Activated naive CD4-positive, alpha-beta T cell treated with anti-CD3 and anti-CD28 coated beads for 36 hours (primary cell): ENCODE measurements at regions of chr7 and their contacts with region 1.

Region 1: GRCh38 chr7:28155019-28155660 is 25.5 kb downstream of the JAZF1 start:
- DNase-seq: no peak
- H3K4me3 Mint-ChIP-seq: no peak overlapping the region
- H3K27ac Mint-ChIP-seq: peak overlapping the region; percentile 36
- H3K4me1 Mint-ChIP-seq: peaks cover 45% of the 10 kb centered on the region
- H3K27me3 Mint-ChIP-seq: no peaks in the 10 kb centered on the region

Region 2: DNA sequence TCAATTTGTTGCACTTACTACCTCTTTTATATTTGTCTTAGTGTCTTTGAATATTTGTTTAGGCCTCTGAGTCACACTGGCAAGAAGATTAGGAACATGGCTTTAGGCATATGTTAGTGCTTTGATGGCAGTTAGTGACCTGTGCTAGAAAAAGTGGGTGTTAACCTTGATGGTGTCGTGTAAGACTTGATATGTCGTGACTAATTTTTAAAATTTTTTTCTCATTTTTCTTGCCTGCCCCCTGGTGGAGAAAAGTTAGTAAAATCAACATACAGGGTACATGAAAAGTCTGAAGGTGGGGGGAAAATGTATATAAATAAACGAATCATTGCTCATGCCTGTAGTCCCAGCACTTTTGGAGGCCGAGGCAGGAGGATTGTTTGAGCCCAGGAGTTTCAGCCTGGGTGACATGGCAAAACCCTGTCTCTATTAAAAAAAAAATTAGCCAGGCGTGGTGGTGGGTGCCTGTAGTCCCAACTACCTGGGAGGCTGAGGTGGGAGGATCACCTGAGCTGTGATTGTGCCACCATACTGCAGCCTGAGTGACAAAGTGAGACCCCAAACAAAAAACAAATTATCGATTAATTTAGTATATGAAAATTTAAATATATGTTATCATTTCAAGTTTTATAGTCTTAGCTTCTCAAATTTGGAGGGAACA is 370.6 kb before region 1 on chr7:
- CTCF ChIA-PET with region 1: no interaction called
- intact Hi-C with region 1: loop called (anchors 1 kb)
- DNase-seq: peak; percentile 26
- H3K4me3 Mint-ChIP-seq: no peak overlapping the region
- H3K27ac Mint-ChIP-seq: no peak overlapping the region
- H3K4me1 Mint-ChIP-seq: peaks cover 37% of the 10 kb centered on the region
- H3K27me3 Mint-ChIP-seq: no peaks in the 10 kb centered on the region

Region 3: DNA sequence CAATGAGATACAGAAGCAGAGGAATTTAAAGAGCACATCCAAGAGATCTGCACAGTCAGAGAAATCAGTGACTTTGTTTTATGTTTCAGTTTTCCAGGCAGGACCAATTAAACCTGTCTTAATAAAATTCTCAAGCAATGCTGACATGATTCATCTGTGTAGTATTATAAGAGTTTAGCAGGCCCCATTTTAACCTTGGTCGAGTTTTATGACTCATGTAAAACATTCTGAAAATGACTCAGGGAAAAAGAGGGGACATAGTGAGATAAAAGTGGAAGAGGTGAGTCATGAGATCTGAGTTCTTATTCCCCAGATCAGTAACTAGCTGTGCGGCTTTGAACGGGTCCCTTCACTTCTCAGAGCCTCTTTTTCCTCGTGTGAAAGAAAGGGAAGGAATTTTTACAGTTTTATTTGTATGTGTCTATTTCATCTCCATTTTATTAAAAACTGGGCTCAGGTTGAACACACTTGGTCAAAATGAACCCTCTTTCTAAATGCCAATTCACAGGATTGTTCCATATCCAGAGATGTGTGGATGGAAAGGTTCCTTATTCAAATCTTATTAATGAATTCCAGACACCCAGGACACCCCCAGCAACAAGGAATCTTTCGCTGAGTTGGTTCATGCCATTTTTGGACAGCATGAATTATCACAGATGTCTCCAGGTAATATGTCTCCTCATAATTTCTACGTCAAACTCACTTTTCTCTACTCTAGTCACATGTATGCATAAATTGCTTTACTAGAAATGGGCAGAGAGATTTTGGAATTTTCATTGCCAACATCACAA is 117.7 kb before region 1 on chr7:
- CTCF ChIA-PET with region 1: no interaction called
- intact Hi-C with region 1: loop called (anchors 1 kb)
- DNase-seq: peak; percentile 50
- H3K4me3 Mint-ChIP-seq: no peak overlapping the region
- H3K27ac Mint-ChIP-seq: no peak overlapping the region
- H3K4me1 Mint-ChIP-seq: peaks cover 26% of the 10 kb centered on the region
- H3K27me3 Mint-ChIP-seq: peaks cover 16% of the 10 kb centered on the region

Region 4: GRCh38 chr7:28207486-28208158 is 52.5 kb after region 1 on chr7:
- CTCF ChIA-PET with region 1: interaction called, 4 read pairs
- intact Hi-C with region 1: loop called (anchors 1 kb)
- DNase-seq: peak; percentile 30
- H3K4me3 Mint-ChIP-seq: no peak overlapping the region
- H3K27ac Mint-ChIP-seq: peak overlapping the region; percentile 43
- H3K4me1 Mint-ChIP-seq: peaks cover 39% of the 10 kb centered on the region
- H3K27me3 Mint-ChIP-seq: peaks cover 7% of the 10 kb centered on the region

Region 5: DNA sequence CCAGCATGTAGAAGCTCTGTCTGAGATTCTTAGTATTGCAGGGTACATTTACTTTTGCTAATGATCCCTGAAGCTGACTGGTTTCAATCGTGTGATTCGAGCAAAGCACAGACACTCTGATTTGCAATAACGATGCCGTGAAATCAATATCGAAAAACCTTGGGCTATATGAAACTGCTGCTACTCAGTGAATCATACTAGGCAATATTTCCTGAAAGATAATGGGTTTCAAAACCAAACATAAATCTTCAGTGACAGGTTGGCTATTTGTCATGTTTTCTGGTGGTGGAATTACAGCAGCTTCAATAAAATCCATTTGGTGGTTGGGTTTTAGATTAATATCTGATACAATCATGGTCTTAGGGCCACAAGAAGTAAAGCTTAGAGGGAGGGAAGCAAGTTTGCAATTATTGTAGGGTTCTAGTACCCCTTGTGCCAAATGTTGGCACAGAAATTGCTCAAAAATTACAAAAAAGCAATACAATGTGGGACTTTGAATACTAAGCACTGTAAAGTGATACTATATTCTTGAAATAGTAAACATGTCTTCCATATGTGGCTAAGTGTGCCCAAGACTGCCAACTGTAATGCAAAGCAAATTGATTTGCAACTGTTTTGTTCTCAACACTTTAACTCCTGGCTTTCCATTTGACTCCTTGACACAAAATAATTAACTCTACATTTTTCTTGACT is 137.8 kb after region 1 on chr7:
- CTCF ChIA-PET with region 1: interaction called, 4 read pairs
- intact Hi-C with region 1: loop called (anchors 1 kb)
- DNase-seq: peak; percentile 39
- H3K4me3 Mint-ChIP-seq: no peak overlapping the region
- H3K27ac Mint-ChIP-seq: no peak overlapping the region
- H3K4me1 Mint-ChIP-seq: peaks cover 20% of the 10 kb centered on the region
- H3K27me3 Mint-ChIP-seq: peaks cover 25% of the 10 kb centered on the region

Region 6: GRCh38 chr7:28408960-28409715 is 254.0 kb after region 1 on chr7:
- CTCF ChIA-PET with region 1: no interaction called
- intact Hi-C with region 1: loop called (anchors 2 kb)
- DNase-seq: peak; percentile 88
- H3K4me3 Mint-ChIP-seq: peak overlapping the region; percentile 80
- H3K27ac Mint-ChIP-seq: no peak overlapping the region
- H3K4me1 Mint-ChIP-seq: peaks cover 39% of the 10 kb centered on the region
- H3K27me3 Mint-ChIP-seq: peaks cover 67% of the 10 kb centered on the region

Region 7: GRCh38 chr7:28926871-28927597 is 771.9 kb after region 1 on chr7:
- CTCF ChIA-PET with region 1: no interaction called
- intact Hi-C with region 1: no loop called
- DNase-seq: peak; percentile 64
- H3K4me3 Mint-ChIP-seq: peak overlapping the region; percentile 75
- H3K27ac Mint-ChIP-seq: no peak overlapping the region
- H3K4me1 Mint-ChIP-seq: peaks cover 21% of the 10 kb centered on the region
- H3K27me3 Mint-ChIP-seq: peaks cover 2% of the 10 kb centered on the region

Region 8: DNA sequence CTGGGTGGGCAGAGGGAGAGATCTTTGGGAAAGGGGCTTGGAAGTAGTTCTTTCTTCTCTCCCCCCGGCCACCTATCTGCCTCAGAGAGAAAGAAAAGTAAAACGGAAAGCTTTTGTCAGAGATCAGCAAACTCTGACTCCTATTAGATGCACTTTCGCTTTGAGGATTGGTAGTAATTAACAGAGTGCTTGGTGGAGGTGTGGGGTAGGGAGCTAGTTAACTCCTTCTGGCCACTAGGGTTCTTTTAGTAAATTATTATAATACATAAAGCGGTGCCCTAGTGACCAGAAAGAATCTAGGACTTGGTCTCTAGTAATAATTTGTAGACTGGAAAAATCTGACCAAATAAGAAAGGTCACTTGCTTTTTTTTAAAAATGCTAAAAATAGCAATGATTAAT is 936.6 kb after region 1 on chr7:
- CTCF ChIA-PET with region 1: no interaction called
- intact Hi-C with region 1: loop called (anchors 1 kb)
- DNase-seq: peak; percentile 21
- H3K4me3 Mint-ChIP-seq: peak overlapping the region; percentile 78
- H3K27ac Mint-ChIP-seq: peak overlapping the region; percentile 86
- H3K4me1 Mint-ChIP-seq: peaks cover 13% of the 10 kb centered on the region
- H3K27me3 Mint-ChIP-seq: peaks cover 3% of the 10 kb centered on the region